Dendritic cell treated with granulocyte-macrophage colony-stimulating factor and Interleukin-4, amounts not matched to agents 40 ng/mL and 50 ng/mL, for 4 days (primary cell): ENCODE measurements at regions of chr18 and their contacts with region 1.

Region 1: DNA sequence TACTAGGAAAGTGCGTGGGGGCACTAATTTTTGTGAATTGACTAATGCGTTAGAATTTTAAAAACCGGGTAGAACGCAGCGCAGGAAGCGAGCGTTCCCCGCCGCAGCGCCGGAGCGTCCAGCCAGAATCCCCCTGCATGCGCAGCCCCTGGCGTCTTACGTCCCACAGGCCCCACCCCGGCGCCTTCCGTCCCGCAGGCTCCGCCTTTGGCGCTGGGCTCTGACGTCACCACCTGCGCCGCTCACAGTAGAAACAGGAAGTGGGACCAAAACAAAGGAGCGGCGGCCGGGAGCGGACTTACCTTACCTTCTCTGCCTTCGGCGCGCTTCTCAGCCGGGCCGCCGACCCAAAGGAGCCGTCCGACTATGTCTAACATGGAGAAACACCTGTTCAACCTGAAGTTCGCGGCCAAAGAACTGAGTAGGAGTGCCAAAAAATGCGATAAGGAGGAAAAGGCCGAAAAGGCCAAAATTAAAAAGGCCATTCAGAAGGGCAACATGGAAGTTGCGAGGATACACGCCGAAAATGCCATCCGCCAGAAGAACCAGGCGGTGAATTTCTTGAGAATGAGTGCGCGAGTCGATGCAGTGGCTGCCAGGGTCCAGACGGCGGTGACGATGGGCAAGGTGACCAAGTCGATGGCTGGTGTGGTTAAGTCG is at the start of gene CHMP1B:
- H3K4me3 Mint-ChIP-seq: peak within 1 kb of the TSS; percentile 100
- H3K27ac Mint-ChIP-seq: peak within 1 kb of the TSS; percentile 99
- H3K4me1 Mint-ChIP-seq: peaks cover 36% of the 10 kb centered on the region
- H3K27me3 Mint-ChIP-seq: peaks cover 8% of the 10 kb centered on the region

Region 2: GRCh38 chr18:11908182-11909060 is 57.1 kb after region 1 on chr18 and contains the start of gene MPPE1:
- intact Hi-C with region 1: loop called (anchors 2 kb)
- H3K4me3 Mint-ChIP-seq: peak within 1 kb of the TSS; percentile 89
- H3K27ac Mint-ChIP-seq: peak within 1 kb of the TSS; percentile 97
- H3K4me1 Mint-ChIP-seq: peaks cover 22% of the 10 kb centered on the region
- H3K27me3 Mint-ChIP-seq: no peaks in the 10 kb centered on the region

Region 3: GRCh38 chr18:11980555-11981382 is 129.5 kb after region 1 on chr18:
- intact Hi-C with region 1: loop called (anchors 2 kb)
- H3K4me3 Mint-ChIP-seq: peak overlapping the region; percentile 86
- H3K27ac Mint-ChIP-seq: peak overlapping the region; percentile 86
- H3K4me1 Mint-ChIP-seq: peaks cover 47% of the 10 kb centered on the region
- H3K27me3 Mint-ChIP-seq: no peaks in the 10 kb centered on the region

Region 4: DNA sequence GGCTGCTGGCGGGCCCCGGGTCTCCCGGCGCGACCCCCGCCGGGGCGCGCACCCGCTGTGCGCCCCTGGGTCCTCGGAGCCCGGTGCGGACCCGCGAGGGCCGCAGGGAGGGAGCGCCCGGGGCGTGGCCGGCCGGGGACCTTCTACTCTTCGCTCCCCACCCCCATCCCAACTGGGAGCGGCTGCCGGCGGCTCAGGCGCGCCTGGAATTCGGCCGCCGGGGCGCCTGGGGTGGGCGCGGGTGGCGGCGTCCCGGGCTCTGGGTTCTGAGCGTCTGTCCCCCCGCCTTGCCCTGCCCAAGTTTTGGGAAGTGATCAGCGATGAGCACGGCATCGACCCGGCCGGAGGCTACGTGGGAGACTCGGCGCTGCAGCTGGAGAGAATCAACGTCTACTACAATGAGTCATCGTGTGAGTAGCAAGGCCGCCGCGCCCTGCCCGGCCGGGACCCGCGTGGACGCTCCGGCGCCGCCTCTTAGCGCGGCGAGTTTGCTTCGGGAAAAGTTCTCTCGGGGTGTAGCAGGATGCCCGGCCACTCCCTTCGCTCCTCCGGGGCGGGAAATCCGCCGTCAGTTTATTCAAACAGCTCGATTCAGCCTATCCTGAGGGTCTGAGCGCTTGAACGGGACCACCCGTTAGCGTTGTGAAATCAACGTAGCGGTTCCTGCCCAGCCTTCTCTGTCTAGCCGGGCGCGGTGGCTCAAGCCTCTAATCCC is 457.3 kb after region 1 on chr18:
- intact Hi-C with region 1: loop called (anchors 2 kb)
- H3K4me3 Mint-ChIP-seq: peak overlapping the region; percentile 77
- H3K27ac Mint-ChIP-seq: peak overlapping the region; percentile 91
- H3K4me1 Mint-ChIP-seq: peaks cover 49% of the 10 kb centered on the region
- H3K27me3 Mint-ChIP-seq: peaks cover 24% of the 10 kb centered on the region